Natural killer cell (primary cell): ENCODE measurements at regions of chr5 and their contacts with region 1.

Region 1: DNA sequence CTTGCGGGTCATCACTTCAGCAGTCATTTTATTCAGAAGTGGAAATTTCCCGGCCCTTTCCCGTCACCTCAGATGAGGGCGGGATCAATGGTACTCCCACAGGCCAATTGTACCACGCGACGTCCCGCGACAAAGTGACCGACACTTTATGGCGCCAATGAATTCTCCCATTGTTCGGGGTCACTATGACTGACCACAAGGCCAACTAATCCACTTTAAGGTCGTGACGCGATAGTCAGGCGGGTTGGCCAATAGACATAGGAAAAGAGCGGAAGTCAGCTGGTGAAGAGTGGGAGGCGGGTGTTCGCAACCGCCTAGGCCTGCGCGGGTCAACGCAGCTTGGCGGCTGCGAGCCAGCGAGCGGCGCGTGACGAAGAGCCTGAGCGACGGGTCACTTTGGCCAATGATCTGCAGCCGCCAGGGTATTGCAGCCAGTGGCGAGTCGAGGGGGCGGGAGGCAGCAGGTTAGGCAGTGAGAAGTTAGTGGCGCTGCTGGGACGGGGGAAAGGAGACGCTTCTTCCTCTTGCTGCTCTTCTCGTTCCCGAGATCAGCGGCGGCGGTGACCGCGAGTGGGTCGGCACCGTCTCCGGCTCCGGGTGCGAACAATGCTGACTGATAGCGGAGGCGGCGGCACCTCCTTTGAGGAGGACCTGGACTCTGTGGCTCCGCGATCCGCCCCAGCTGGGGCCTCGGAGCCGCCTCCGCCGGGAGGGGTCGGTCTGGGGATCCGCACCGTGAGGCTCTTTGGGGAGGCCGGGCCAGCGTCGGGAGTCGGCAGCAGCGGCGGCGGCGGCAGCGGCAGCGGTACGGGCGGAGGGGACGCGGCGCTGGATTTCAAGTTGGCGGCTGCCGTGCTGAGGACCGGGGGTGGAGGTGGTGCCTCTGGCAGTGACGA is at the start of gene ANKHD1:
- DNase-seq: peak; percentile 94 to 99
- ATAC-seq: peak; percentile 80 to 93 (median 81)
- H3K4me3 ChIP-seq: peak within 1 kb of the TSS; percentile 72
- H3K4me3 Mint-ChIP-seq: no peak within 1 kb of the TSS
- H3K27ac ChIP-seq: peak within 1 kb of the TSS; percentile 94
- H3K27ac Mint-ChIP-seq: no peak within 1 kb of the TSS
- H3K4me1 ChIP-seq: peaks cover 20% of the 10 kb centered on the region
- H3K4me1 Mint-ChIP-seq: peaks cover 26 to 35% of the 10 kb centered on the region in 2 donors
- H3K27me3 ChIP-seq: no peaks in the 10 kb centered on the region
- H3K27me3 Mint-ChIP-seq: no peaks in the 10 kb centered on the region
- CTCF ChIP-seq: no peak
- total RNA-seq, gene ANKHD1: 225 to 239 (median 230) TPM

Region 2: DNA sequence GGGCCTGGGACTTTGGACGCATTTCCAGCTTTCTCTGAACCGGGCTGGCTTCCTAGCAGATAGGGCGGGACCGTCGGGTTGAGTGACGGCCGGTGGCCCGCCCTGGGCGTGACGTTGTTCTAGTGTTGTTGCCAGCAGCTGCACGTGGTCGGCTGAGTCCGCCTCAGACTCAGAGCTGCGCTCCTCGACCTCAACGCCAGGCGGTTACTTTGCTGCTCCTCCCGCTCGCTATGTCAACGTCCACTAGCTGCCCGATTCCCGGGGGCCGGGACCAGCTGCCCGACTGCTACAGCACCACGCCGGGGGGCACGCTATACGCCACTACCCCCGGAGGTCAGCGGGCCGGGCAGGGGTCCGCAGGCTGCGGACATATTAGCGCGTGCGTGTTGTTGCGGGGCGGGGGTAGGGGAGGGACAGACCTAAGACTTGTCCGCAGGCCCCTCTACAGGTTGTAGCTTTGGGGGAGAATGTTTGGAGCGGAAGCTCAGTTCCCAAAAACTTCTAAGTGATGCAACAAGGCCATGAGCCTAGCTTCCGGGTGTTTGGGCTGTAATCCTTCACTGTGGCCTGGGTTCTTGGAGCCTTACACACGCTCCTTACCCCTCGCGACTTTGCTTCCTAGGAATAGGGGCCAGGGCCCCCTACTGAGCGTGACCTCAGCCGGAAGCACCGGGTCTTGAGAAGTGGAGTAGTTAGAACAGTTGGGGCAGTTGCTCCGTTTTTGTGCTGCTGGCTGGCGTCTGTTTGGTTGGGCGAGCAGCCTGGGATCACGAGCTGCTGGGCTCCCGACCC is 146.1 kb after region 1 on chr5 and contains the start of gene EIF4EBP3:
- intact Hi-C with region 1: loop called (anchors 1 kb)
- DNase-seq: peak; percentile 89 to 95
- ATAC-seq: peak; percentile 97 to 99 (median 98)
- H3K4me3 ChIP-seq: peak within 1 kb of the TSS; percentile 60
- H3K4me3 Mint-ChIP-seq: peak within 1 kb of the TSS; percentile 86
- H3K27ac ChIP-seq: peak within 1 kb of the TSS; percentile 81
- H3K27ac Mint-ChIP-seq: peak within 1 kb of the TSS; percentile 87 to 95
- H3K4me1 ChIP-seq: peaks cover 30% of the 10 kb centered on the region
- H3K4me1 Mint-ChIP-seq: peaks cover 27 to 28% of the 10 kb centered on the region in 2 donors
- H3K27me3 ChIP-seq: no peaks in the 10 kb centered on the region
- H3K27me3 Mint-ChIP-seq: no peaks in the 10 kb centered on the region
- CTCF ChIP-seq: peak; percentile 65
- total RNA-seq, gene EIF4EBP3: 5.8 to 9.4 (median 6.0) TPM

Region 3: GRCh38 chr5:140564196-140565023 is 162.8 kb after region 1 on chr5 and contains the starts of genes APBB3 and SLC35A4:
- intact Hi-C with region 1: loop called (anchors 1 kb)
- DNase-seq: peak; percentile 97 to 100
- ATAC-seq: peak; percentile 86 to 96 (median 87)
- H3K4me3 ChIP-seq: peak within 1 kb of the TSS; percentile 89
- H3K4me3 Mint-ChIP-seq: peak within 1 kb of the TSS; percentile 99
- H3K27ac ChIP-seq: peak within 1 kb of the TSS; percentile 94
- H3K27ac Mint-ChIP-seq: peak within 1 kb of the TSS; percentile 94 to 96
- H3K4me1 ChIP-seq: peaks cover 32% of the 10 kb centered on the region
- H3K4me1 Mint-ChIP-seq: peaks cover 50 to 60% of the 10 kb centered on the region in 2 donors
- H3K27me3 ChIP-seq: no peaks in the 10 kb centered on the region
- H3K27me3 Mint-ChIP-seq: no peaks in the 10 kb centered on the region
- CTCF ChIP-seq: no peak
- total RNA-seq, gene APBB3: 44.0 to 44.9 (median 44.4) TPM
- total RNA-seq, gene SLC35A4: 63.1 to 76.1 (median 72.3) TPM

Region 4: DNA sequence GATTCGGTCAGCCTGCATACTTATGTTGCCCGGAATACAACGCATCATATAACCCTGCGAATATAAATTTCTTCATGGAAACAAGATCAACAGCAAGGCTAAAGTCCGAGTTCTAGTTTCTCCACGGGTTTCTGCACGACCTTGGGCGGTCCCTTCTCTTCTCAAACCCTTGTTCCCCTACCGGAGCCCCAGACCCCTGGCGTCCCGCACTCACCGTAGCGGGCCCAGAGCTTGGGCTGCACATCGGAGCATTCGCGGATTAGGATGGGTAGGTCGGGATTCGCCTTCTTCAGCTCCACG is 245.4 kb after region 1 on chr5:
- intact Hi-C with region 1: loop called (anchors 1 kb)
- DNase-seq: no peak
- ATAC-seq: no peak
- H3K4me3 ChIP-seq: peak overlapping the region; percentile 78
- H3K4me3 Mint-ChIP-seq: peak overlapping the region; percentile 100
- H3K27ac ChIP-seq: peak overlapping the region; percentile 89
- H3K27ac Mint-ChIP-seq: peak overlapping the region; percentile 94 to 99
- H3K4me1 ChIP-seq: peaks cover 20% of the 10 kb centered on the region
- H3K4me1 Mint-ChIP-seq: peaks cover 31 to 46% of the 10 kb centered on the region in 2 donors
- H3K27me3 ChIP-seq: no peaks in the 10 kb centered on the region
- H3K27me3 Mint-ChIP-seq: no peaks in the 10 kb centered on the region
- CTCF ChIP-seq: no peak

Region 5: DNA sequence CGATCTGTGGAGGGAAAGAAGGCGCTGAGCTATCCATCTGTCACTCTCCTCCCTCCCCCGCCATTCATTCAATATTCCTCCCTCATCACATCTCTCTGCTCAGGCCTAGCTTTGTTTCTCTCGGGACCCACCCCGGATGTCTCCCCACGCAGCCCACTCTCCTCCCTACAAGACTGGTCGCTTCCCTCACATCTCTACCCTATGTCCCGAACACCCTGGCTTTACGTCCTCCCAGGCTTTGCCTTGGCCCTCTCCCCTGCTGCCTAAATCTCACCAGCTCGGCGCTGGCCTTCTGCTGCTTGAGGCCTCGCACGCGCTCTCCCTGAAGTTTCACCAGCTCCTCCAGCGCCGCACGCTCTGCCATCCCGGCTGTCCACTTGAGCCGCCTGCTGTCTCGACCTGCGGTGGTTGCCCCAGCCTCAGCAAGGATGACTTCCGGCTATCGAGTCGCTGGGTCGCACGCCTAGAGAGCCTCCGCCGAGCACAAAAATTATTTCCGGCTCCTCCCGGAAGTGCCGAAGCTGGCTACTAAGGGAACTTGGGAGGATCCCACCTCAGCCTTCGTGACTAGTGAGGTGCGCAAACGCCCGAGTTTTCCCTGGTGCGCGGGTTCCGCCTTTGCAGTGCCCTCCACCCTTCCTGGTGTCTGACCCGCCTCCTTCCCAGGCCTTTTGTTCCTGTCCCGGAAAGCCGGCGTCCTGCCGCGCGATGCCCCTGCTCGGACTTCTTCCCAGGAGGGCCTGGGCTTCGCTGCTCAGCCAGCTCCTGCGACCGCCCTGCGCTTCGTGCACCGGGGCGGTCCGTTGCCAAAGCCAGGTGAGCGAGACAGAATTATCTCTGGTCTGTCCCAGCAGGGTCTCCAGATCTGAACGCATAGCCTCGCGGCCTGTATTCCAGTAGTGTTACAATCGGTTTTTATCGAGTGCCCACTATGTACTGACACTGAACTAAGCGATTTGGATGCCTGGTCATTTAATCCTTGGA is 289.6 kb after region 1 on chr5 and contains the starts of genes HARS1 and HARS2:
- intact Hi-C with region 1: loop called (anchors 2 kb)
- DNase-seq: peak; percentile 70 to 91
- ATAC-seq: peak; percentile 95 to 97 (median 97)
- H3K4me3 ChIP-seq: peak within 1 kb of the TSS; percentile 77
- H3K4me3 Mint-ChIP-seq: peak within 1 kb of the TSS; percentile 100
- H3K27ac ChIP-seq: peak within 1 kb of the TSS; percentile 64
- H3K27ac Mint-ChIP-seq: peak within 1 kb of the TSS; percentile 92 to 94
- H3K4me1 ChIP-seq: peaks cover 16% of the 10 kb centered on the region
- H3K4me1 Mint-ChIP-seq: peaks cover 31 to 54% of the 10 kb centered on the region in 2 donors
- H3K27me3 ChIP-seq: no peaks in the 10 kb centered on the region
- H3K27me3 Mint-ChIP-seq: no peaks in the 10 kb centered on the region
- CTCF ChIP-seq: no peak
- total RNA-seq, gene HARS1: 62.4 to 73.8 (median 68.3) TPM
- total RNA-seq, gene HARS2: 42.5 to 48.4 (median 45.6) TPM